ENCODE measurements at regions of chr2 and their contacts with region 1.

Region 1: GRCh38 chr2:43226558-43226954 is at the start of gene ZFP36L2:
- DNase-seq: peak; percentile 95 to 99 (median 96)
- ATAC-seq: peak; percentile 79
- H3K4me3 ChIP-seq: peak within 1 kb of the TSS; percentile 62
- H3K27ac ChIP-seq: peak within 1 kb of the TSS; percentile 97
- H3K4me1 ChIP-seq: peaks cover 12 to 47% of the 10 kb centered on the region in 2 experiments; a peak in 4 of 5 replicates
- H3K27me3 ChIP-seq: no peaks in the 10 kb centered on the region
- CTCF ChIP-seq: peak in 1 of 3 experiments; percentile 15; a peak in 1 of 6 replicates
- EP300 ChIP-seq: no peak
- POLR2A ChIP-seq: peak; percentile 95
- RAD21 ChIP-seq: no peak
- polyA plus RNA-seq, gene ZFP36L2: 32.4 to 42.8 TPM

Region 2: GRCh38 chr2:42928692-42929545 is 297.6 kb before region 1 on chr2:
- CTCF ChIA-PET with region 1: no interaction called
- POLR2A ChIA-PET with region 1: interaction called, 3 read pairs
- in situ Hi-C with region 1: no loop called
- intact Hi-C with region 1: loop called (anchors 1 kb)
- DNase-seq: peak; percentile 69 to 87 (median 70)
- ATAC-seq: peak; percentile 79
- H3K4me3 ChIP-seq: no peak overlapping the region
- H3K27ac ChIP-seq: peak overlapping the region; percentile 91
- H3K4me1 ChIP-seq: peaks cover 69 to 76% of the 10 kb centered on the region in 2 experiments
- H3K27me3 ChIP-seq: no peaks in the 10 kb centered on the region
- CTCF ChIP-seq: peak; percentile 75 to 81 (median 80)
- EP300 ChIP-seq: peak; percentile 33; the same call in 1 of the 2 replicates
- POLR2A ChIP-seq: no peak
- RAD21 ChIP-seq: peak in 1 of 2 experiments; percentile 23; a peak in 2 of 4 replicates

Region 3: GRCh38 chr2:43024515-43025011 is 202.0 kb before region 1 on chr2:
- CTCF ChIA-PET with region 1: interaction called, 33 read pairs
- POLR2A ChIA-PET with region 1: interaction called, 4 read pairs
- in situ Hi-C with region 1: loop called (anchors 5 kb)
- intact Hi-C with region 1: loop called (anchors 1 kb)
- DNase-seq: peak; percentile 79 to 87 (median 84)
- ATAC-seq: peak; percentile 96
- H3K4me3 ChIP-seq: no peak overlapping the region
- H3K27ac ChIP-seq: no peak overlapping the region
- H3K4me1 ChIP-seq: peaks cover 0 to 13% of the 10 kb centered on the region in 2 experiments; a peak in 3 of 5 replicates
- H3K27me3 ChIP-seq: no peaks in the 10 kb centered on the region
- CTCF ChIP-seq: peak; percentile 90 to 92 (median 90)
- EP300 ChIP-seq: no peak
- POLR2A ChIP-seq: no peak
- RAD21 ChIP-seq: peak; percentile 92 to 98

Region 4: DNA sequence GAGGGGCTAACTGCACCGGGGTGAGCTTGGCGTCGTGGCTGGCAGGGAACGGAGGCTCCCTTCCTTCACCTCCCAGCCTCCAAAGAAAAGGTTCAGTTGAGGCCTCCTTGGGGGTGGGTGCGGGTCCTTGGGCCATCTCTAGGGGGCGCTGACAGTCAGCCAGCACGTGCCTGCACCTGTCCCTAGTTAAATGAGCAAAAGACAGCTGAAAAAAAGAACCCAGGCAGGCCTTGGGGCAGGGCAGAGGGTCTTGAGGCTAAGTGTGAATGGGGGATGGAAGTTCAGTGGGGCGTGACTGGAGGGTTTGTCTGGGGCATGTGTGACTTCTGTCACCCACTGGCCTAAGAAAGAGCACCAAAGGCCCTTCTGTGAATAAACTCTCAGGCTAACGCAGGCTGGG is 56.6 kb before region 1 on chr2:
- CTCF ChIA-PET with region 1: no interaction called
- POLR2A ChIA-PET with region 1: interaction called, 10 read pairs
- in situ Hi-C with region 1: loop called (anchors 10 kb)
- intact Hi-C with region 1: no loop called
- DNase-seq: peak; percentile 79 to 83 (median 80)
- ATAC-seq: peak; percentile 85
- H3K4me3 ChIP-seq: no peak overlapping the region
- H3K27ac ChIP-seq: peak overlapping the region; percentile 28; the same call in 1 of the 3 replicates
- H3K4me1 ChIP-seq: peaks cover 49 to 56% of the 10 kb centered on the region in 2 experiments
- H3K27me3 ChIP-seq: no peaks in the 10 kb centered on the region
- CTCF ChIP-seq: peak; percentile 84 to 97 (median 85)
- EP300 ChIP-seq: no peak
- POLR2A ChIP-seq: no peak
- RAD21 ChIP-seq: peak; percentile 71 to 86

Region 5: DNA sequence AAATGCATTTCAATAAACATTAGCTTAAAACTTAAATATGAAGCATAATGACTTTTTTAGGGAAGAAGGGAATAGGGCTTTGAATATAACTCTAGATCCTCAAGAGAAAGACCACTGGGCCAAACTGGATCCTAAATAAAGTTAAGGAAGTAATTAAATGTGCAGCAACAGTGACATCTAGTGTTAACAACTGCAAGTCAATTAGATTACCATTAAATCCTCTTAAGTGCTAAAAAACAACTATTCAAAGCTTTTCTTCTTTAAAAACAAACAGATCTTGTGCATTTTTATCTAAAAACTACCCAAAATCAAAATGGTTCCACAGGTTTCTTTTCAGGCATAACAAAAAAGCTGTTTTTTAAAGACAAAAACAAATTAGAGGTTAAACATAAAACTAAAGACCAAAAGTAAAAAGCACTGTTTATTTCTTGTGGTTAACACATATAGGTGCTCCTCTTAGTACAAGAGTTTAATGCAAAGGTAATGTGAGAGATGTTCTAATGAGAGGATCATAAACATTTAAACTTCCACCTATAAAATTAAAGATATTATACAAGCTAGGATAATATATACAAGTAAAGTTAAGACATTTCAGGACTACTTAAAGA is 257.9 kb after region 1 on chr2:
- CTCF ChIA-PET with region 1: interaction called, 20 read pairs
- POLR2A ChIA-PET with region 1: interaction called, 6 read pairs
- in situ Hi-C with region 1: loop called (anchors 5 kb)
- intact Hi-C with region 1: loop called (anchors 1 kb)
- DNase-seq: peak; percentile 15 to 81 (median 27)
- ATAC-seq: peak; percentile 83
- H3K4me3 ChIP-seq: no peak overlapping the region
- H3K27ac ChIP-seq: no peak overlapping the region
- H3K4me1 ChIP-seq: no peaks in the 10 kb centered on the region
- H3K27me3 ChIP-seq: no peaks in the 10 kb centered on the region
- CTCF ChIP-seq: peak in 2 of 3 experiments; percentile 44 to 79; a peak in 4 of 6 replicates
- EP300 ChIP-seq: no peak
- POLR2A ChIP-seq: no peak
- RAD21 ChIP-seq: peak; percentile 92 to 93

Region 6: DNA sequence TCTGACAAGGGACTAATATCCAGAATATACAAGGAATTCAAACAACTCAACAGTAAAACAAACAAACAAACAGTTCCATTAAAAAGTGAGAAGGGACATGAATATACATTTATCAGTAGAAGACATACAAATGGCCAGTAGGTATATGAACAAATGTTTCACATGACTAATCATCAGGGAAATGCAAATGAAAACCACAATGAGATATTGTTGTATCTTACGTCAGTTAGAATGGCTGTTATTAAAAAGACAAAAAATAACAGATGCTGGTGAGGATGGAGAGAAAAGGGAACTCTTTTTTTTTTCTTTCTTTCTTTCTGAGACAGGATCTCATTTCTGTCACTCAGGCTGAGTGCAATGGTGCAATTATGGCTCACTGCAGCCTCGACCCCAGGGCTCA is 1310.7 kb after region 1 on chr2:
- CTCF ChIA-PET with region 1: no interaction called
- POLR2A ChIA-PET with region 1: no interaction called
- in situ Hi-C with region 1: no loop called
- intact Hi-C with region 1: no loop called
- DNase-seq: no peak
- ATAC-seq: no peak
- H3K4me3 ChIP-seq: no peak overlapping the region
- H3K27ac ChIP-seq: no peak overlapping the region
- H3K4me1 ChIP-seq: peaks cover 4 to 6% of the 10 kb centered on the region in 2 experiments; a peak in 4 of 5 replicates
- H3K27me3 ChIP-seq: no peaks in the 10 kb centered on the region
- CTCF ChIP-seq: no peak
- EP300 ChIP-seq: no peak
- POLR2A ChIP-seq: no peak
- RAD21 ChIP-seq: no peak

Measured in K562 (cell line).